ENCODE measurements at regions of chr5 and their contacts with region 1.

Region 1: GRCh38 chr5:142699184-142699720 is 13.4 kb upstream of the FGF1 start:
- DNase-seq: peak; percentile 89 to 95
- H3K4me3 ChIP-seq: no peak overlapping the region
- H3K27ac ChIP-seq: peak overlapping the region in 2 of 5 donors; percentile 59 to 76
- H3K4me1 ChIP-seq: peaks cover 0 to 24% (median 14%) of the 10 kb centered on the region in 4 donors
- H3K27me3 ChIP-seq: no peaks in the 10 kb centered on the region
- CTCF ChIP-seq: peak in 5 of 7 experiments; percentile 87 to 96 (median 94)
- EP300 ChIP-seq: no peak
- POLR2A ChIP-seq: no peak

Region 2: DNA sequence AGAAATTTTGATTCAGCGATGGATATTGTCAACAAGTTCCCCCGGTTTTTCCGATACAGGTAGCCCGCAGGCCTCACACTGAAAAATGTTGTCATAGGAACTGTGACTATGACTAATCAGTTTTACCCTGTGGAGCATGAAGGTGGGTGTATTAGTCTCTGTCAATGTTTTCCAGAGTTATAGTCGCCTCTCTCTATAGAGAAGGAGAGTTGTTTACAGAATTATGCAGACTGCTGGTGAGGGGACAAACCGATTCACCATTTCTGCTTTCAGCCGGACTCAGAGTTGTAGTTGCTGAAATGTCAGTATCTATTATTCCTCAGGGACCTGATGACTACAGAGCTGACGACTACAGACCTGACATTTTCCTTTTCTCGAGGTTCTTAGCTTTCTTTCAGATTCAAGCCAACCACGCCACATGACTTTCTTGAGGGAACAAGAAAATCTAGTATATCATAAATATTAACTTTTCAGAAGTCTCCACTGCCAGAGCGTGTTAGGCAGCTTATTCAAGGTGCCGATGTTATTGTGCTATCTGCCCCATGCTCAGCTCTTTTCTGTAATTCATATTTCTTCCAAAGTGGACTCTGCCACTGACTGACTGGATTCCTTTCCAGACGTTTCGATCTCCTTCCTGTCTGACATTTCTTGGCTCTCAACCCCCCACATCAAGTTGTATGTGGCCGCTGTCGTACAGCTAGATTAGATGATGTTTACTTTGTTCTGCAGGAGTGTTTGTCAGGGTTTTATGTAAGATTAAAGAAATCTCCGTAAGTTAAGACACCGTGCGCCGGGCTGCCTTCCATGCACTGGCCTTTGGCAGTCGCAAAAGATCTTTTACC is 191.5 kb before region 1 on chr5:
- intact Hi-C with region 1: no loop called
- DNase-seq: peak; percentile 55 to 62
- H3K4me3 ChIP-seq: peak overlapping the region in 1 of 4 donors; percentile 13
- H3K27ac ChIP-seq: peak overlapping the region in 3 of 5 donors; percentile 30 to 61 (median 59)
- H3K4me1 ChIP-seq: peaks cover 15 to 37% (median 26%) of the 10 kb centered on the region in 4 donors
- H3K27me3 ChIP-seq: no peaks in the 10 kb centered on the region
- CTCF ChIP-seq: no peak
- EP300 ChIP-seq: no peak
- POLR2A ChIP-seq: no peak

Region 3: DNA sequence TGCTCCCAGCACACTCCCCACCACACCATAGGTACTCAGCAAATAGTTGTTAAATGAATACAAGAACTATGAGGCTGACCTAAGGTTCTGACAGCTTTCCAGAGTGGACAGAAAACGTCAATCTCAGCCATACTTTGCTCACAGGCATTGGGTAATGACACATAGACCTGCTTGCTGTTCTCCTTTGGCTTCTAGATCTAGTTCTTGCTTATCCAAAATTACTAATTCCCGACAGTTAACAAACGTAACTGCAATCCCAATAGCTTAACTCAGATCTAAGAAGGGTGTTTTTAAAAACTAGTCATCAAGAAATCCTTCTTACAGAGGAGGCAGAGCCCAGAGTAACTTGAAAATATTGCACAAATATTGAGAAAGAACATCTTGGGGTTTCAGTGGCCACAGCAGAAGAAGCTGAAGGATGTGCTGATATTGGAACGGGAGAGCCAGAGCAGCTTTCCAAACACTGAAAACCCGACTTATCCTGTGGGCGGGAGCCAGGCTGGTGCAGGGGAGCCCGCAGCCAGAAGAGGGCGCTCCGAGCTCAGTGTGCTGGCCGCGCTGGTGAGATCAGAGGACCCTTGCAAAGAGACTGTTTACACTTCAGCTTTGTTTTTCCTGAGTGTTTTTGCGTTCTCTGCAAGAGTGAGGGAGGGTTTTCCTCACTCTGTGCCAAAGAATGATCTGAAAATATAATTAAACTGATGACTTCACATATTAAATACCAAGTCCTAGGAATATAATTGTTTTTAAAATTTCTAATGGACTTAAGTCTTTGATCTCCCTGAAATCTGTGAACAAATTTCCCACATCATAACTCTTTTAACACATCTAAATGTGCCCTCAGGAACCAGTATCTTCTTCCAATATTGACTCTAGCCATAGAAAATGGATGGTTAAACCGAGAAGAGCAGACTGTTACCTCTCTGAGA is 43.6 kb before region 1 on chr5:
- intact Hi-C with region 1: loop called (anchors 5 kb)
- DNase-seq: peak; percentile 83 to 95
- H3K4me3 ChIP-seq: no peak overlapping the region
- H3K27ac ChIP-seq: peak overlapping the region in 2 of 5 donors; percentile 42 to 63
- H3K4me1 ChIP-seq: peaks cover 0 to 9% (median 7%) of the 10 kb centered on the region in 4 donors
- H3K27me3 ChIP-seq: peaks cover 0 to 11% (median 0%) of the 10 kb centered on the region in 3 donors
- CTCF ChIP-seq: peak in 5 of 7 experiments; percentile 89 to 98 (median 93)
- EP300 ChIP-seq: no peak
- POLR2A ChIP-seq: no peak